Activated T-helper 2 cell treated with anti-CD3 and anti-CD28 coated beads, Interferon-gamma antibody, Interleukin-2, Interleukin-4, amounts not matched to agents 10 μg/mL and 5 μg/mL and 100 μg/mL, durations not matched to agents 14 hours and 24 hours and 36 hours (primary cell): ENCODE measurements at regions of chr1 and their contacts with region 1.

Region 1: DNA sequence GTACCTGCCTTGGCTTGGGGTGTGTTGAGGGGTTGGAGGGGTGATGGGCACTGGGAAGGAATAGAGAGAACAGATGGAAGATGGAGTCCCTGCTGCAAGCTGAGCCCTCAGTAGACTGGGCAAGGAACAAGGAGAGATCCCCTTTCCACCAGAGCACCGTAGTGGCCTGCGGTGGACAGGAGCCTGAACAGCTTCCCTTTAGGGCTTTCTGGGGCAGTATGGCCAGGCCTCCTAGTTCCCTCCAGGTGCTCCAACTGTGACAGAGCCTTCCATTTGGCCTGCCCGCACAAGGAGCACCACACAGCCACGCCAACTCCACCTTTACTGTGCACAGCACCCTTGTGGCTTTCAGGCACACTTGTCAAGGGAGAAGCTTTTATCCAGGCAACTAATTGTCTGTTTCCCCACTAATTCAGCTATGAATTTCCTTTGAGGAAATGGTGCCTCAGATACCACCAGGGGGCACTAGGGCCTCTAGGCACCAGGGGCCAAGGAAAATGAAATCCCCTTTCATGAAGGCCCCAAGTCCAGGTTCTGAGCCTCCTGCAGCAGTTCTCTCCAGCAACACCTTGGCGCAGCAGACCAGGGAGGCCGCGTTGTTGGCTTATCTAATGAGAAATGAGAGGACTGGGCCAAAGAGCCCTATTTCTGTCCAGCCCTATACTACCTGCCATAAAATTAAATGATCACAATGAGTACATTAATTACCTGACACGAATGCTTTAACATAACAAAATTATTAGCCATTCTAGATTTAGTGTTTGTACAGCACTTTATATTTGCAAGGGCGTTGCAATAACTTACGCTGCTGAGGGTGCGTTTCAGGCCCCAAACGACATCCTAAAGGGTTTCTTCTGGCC is 23.1 kb upstream of the ERI3 start:
- DNase-seq: no peak
- H3K4me3 Mint-ChIP-seq: no peak overlapping the region
- H3K27ac Mint-ChIP-seq: no peak overlapping the region
- H3K4me1 Mint-ChIP-seq: no peaks in the 10 kb centered on the region
- H3K27me3 Mint-ChIP-seq: peaks cover 7% of the 10 kb centered on the region

Region 2: DNA sequence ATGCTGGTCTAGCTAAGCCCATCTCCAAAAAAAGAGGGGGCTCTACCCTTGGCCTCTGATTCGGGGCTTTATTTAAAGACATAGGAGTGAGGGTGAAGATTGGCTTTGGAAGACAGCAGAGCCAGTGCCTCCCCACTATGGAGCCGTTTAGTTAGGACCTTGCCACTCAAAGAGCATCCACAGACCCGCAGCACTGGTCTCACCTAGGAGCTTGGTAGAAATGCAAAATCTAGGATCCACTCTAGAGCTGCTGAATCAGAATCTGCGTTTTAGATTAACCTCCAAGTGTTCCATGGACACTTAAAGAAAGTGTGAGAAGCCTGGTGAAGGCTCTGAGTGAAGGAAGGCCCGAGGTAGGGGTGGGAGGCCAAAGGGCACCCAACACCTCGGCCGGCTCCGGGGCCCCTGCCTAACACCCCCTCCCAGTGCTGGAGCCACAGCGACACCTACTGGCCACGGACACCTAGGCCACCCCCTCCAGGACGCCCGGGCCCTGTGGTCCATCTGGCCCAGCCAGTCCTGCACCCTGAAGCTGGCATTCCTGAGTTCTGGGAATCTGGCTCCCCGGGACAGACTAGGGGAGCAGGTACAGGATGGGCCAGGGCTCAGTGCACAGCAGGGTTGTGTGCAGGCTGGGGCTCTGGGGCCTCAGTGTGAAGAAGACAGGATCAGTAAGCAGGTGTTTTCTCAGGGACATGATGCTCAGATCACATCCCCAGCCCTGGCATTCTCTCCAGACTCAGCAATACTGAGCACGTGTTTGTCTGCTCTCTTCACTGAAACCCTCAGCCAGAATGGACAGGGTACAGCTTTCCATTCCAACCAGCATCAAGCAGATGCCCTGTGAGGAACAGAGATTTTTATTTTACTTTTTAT is 217.0 kb after region 1 on chr1:
- intact Hi-C with region 1: loop called (anchors 5 kb)
- DNase-seq: peak; percentile 56
- H3K4me3 Mint-ChIP-seq: no peak overlapping the region
- H3K27ac Mint-ChIP-seq: no peak overlapping the region
- H3K4me1 Mint-ChIP-seq: no peaks in the 10 kb centered on the region
- H3K27me3 Mint-ChIP-seq: peaks cover 2% of the 10 kb centered on the region

Region 3: GRCh38 chr1:45470306-45470798 is 1092.2 kb after region 1 on chr1:
- intact Hi-C with region 1: no loop called
- DNase-seq: no peak
- H3K4me3 Mint-ChIP-seq: no peak overlapping the region
- H3K27ac Mint-ChIP-seq: no peak overlapping the region
- H3K4me1 Mint-ChIP-seq: no peaks in the 10 kb centered on the region
- H3K27me3 Mint-ChIP-seq: peaks cover 8% of the 10 kb centered on the region